Dendritic cell treated with granulocyte-macrophage colony-stimulating factor and Interleukin-4, amounts not matched to agents 40 ng/mL and 50 ng/mL, for 4 days (primary cell): ENCODE measurements at regions of chr14 and their contacts with region 1.

Region 1: GRCh38 chr14:65412032-65412846 is at the start of gene FUT8:
- H3K4me3 Mint-ChIP-seq: peak within 1 kb of the TSS; percentile 95
- H3K27ac Mint-ChIP-seq: peak within 1 kb of the TSS; percentile 89
- H3K4me1 Mint-ChIP-seq: peaks cover 13% of the 10 kb centered on the region
- H3K27me3 Mint-ChIP-seq: peaks cover 16% of the 10 kb centered on the region

Region 2: GRCh38 chr14:65164068-65164824 is 248.0 kb before region 1 on chr14:
- intact Hi-C with region 1: loop called (anchors 5 kb)
- H3K4me3 Mint-ChIP-seq: no peak overlapping the region
- H3K27ac Mint-ChIP-seq: no peak overlapping the region
- H3K4me1 Mint-ChIP-seq: no peaks in the 10 kb centered on the region
- H3K27me3 Mint-ChIP-seq: peaks cover 8% of the 10 kb centered on the region

Region 3: DNA sequence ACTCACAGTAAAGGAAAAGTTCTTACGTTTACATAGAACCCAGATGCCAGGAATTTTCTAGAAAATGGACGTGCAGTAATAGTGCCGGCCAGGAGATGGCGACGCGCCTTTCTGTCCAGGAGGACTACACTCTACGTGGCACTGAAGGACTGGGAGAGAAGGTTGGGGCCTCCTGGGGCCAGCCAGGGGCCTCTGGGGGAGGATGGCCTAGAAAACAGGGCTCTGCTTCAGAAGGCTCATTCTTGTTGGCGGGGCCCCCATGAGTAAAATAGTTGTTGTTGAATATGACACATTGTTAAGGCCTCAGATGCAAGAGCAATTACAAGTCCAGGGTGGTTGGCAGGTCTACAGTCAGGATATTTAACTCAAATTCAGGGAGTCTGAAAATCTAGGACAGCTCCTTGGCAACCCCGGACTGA is 189.8 kb before region 1 on chr14:
- intact Hi-C with region 1: loop called (anchors 5 kb)
- H3K4me3 Mint-ChIP-seq: no peak overlapping the region
- H3K27ac Mint-ChIP-seq: no peak overlapping the region
- H3K4me1 Mint-ChIP-seq: peaks cover 24% of the 10 kb centered on the region
- H3K27me3 Mint-ChIP-seq: peaks cover 15% of the 10 kb centered on the region

Region 4: GRCh38 chr14:65373679-65374039 is 38.6 kb before region 1 on chr14:
- intact Hi-C with region 1: no loop called
- H3K4me3 Mint-ChIP-seq: no peak overlapping the region
- H3K27ac Mint-ChIP-seq: no peak overlapping the region
- H3K4me1 Mint-ChIP-seq: peaks cover 4% of the 10 kb centered on the region
- H3K27me3 Mint-ChIP-seq: peaks cover 10% of the 10 kb centered on the region

Region 5: DNA sequence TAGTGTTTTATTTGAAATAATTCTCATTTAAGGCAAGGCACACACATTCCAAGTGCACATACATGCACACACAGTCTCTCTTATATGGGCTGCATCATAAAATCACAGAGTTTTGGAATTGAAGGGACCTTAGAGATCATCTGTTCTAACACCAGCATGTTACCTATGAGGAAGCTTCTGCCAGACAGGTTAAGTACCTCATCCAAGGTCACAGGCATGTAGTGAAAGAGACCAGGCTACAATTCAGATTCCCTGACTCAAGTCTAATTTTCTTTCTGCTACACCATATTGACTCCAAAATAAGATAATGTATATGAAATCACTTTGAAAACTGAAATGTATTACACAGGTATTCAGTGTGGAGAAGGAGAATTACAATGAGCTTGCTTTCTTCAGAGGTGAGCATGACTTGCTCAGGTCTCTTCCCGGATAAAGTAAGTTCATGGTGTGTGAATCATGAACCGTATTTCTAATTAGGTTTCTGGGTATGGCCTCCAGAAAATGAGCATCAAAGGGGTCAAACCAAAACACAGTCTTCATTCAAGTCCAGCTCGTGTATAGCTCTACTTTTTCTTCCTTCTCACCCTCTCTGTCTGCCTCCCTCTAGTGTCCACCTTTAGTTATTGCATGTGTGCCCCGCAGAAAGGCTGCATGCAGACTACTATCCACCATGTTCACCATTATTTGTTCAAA is 412.2 kb after region 1 on chr14:
- intact Hi-C with region 1: loop called (anchors 2 kb)
- H3K4me3 Mint-ChIP-seq: no peak overlapping the region
- H3K27ac Mint-ChIP-seq: no peak overlapping the region
- H3K4me1 Mint-ChIP-seq: no peaks in the 10 kb centered on the region
- H3K27me3 Mint-ChIP-seq: peaks cover 2% of the 10 kb centered on the region